SK-N-SH (cell line): ENCODE measurements at regions of chr5 and their contacts with region 1.

Region 1: DNA sequence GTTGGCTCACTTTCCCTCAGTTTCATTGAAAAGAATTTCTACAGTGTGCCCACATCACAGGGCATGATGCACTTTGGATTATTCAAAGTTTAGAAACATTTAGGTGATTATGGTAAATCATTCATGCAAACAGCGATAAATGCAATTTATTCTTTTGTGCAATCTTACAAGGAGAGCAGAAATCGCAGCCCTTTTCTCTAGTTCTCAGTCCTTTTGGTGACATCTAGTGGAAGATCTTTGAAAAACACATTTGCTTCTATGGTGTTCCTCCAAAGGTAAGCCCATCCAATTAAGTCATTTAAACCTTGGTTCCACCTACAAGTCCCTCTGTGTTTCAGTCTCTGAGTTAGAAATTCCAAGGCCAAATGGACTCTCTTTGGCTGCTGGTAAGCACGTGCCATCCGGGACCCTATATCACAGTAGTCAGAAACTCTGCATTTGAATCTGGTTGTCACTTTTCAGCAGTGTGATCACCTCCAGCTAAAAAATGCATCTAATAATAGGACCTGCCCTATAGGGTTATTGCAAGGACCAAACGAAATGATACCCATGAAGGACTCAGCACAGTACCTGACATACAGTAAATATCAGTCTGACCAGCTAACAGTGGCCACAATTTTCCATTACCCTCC is 66.4 kb downstream of the MACROH2A1 start:
- DNase-seq: peak; percentile 66
- H3K4me3 ChIP-seq: no peak overlapping the region
- H3K27ac ChIP-seq: no peak overlapping the region
- H3K4me1 ChIP-seq: peaks cover 0 to 23% of the 10 kb centered on the region in 2 experiments; a peak in 3 of 4 replicates
- H3K27me3 ChIP-seq: no peaks in the 10 kb centered on the region
- CTCF ChIP-seq: peak; percentile 72
- EP300 ChIP-seq: no peak
- RAD21 ChIP-seq: peak; percentile 84

Region 2: DNA sequence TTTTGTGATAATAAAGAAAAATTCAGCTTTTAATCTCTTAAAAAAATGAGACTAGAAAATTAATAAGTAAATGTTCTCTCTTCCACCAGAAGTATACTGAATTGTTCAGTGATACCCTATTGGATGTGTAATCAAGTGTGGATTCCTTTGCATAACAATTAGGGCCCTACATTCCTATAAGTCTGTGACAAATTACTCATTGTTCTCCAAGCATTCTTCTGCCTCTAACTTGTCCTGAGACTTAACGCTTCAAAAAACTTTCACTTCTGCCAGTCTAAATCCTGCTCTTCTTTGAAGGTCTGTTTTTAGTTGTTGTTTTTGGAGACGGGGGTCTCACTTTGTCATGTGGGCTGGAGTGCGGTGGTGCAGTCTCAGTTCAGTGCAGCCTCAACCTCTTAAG is 583.2 kb before region 1 on chr5:
- CTCF ChIA-PET with region 1: no interaction called
- POLR2A ChIA-PET with region 1: no interaction called
- DNase-seq: no peak
- H3K4me3 ChIP-seq: no peak overlapping the region
- H3K27ac ChIP-seq: no peak overlapping the region
- H3K4me1 ChIP-seq: no peaks in the 10 kb centered on the region
- H3K27me3 ChIP-seq: no peaks in the 10 kb centered on the region
- CTCF ChIP-seq: no peak
- EP300 ChIP-seq: no peak
- RAD21 ChIP-seq: no peak

Region 3: DNA sequence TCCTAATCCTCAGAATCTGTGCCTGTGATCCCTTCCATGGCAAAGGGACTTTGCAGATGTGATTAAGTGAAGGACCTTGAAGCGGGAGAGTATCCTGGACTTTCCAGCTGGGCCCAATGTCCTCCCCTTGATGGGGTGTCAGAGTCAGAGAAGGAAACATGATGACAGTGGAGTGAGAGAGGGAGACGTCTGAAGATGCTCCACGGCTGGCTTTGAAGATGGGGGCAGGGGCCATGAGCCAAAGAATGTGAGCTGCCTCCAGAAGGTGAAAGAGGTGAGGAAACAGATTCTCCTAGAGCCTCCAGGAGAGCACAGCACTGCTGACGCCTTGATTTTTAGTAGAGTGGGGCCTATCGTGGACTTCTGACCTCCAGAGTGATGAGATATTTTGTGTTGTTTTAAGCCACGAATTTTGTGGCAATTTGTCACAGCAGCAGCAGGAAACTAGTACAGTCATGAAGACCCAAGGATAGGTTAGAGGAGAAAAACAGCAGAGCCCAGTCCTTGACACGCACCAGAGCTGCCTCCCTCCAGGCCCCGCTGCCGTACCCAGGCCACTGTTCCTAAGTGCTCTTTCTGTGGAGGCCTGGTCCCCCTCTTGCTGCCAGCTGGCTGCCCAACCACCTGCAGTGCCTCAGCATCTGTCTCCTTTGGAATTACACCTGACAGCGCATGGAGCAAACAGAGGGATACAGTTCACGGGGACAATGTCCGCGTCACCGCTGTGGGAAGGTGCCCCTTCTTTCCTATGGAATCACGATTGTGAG is 11.7 kb before region 1 on chr5:
- CTCF ChIA-PET with region 1: interaction called, 17 read pairs
- POLR2A ChIA-PET with region 1: no interaction called
- DNase-seq: no peak
- H3K4me3 ChIP-seq: no peak overlapping the region
- H3K27ac ChIP-seq: no peak overlapping the region
- H3K4me1 ChIP-seq: no peaks in the 10 kb centered on the region; a peak in 1 of 4 replicates
- H3K27me3 ChIP-seq: no peaks in the 10 kb centered on the region
- CTCF ChIP-seq: no peak
- EP300 ChIP-seq: no peak
- RAD21 ChIP-seq: no peak

Region 4: GRCh38 chr5:135345956-135346731 is 13.5 kb after region 1 on chr5:
- CTCF ChIA-PET with region 1: interaction called, 11 read pairs
- POLR2A ChIA-PET with region 1: interaction called, 3 read pairs
- DNase-seq: no peak
- H3K4me3 ChIP-seq: no peak overlapping the region
- H3K27ac ChIP-seq: no peak overlapping the region
- H3K4me1 ChIP-seq: peaks cover 7 to 14% of the 10 kb centered on the region in 2 experiments; a peak in 3 of 4 replicates
- H3K27me3 ChIP-seq: no peaks in the 10 kb centered on the region
- CTCF ChIP-seq: no peak
- EP300 ChIP-seq: no peak
- RAD21 ChIP-seq: no peak